ENCODE measurements at regions of chr7 and their contacts with region 1.

Region 1: DNA sequence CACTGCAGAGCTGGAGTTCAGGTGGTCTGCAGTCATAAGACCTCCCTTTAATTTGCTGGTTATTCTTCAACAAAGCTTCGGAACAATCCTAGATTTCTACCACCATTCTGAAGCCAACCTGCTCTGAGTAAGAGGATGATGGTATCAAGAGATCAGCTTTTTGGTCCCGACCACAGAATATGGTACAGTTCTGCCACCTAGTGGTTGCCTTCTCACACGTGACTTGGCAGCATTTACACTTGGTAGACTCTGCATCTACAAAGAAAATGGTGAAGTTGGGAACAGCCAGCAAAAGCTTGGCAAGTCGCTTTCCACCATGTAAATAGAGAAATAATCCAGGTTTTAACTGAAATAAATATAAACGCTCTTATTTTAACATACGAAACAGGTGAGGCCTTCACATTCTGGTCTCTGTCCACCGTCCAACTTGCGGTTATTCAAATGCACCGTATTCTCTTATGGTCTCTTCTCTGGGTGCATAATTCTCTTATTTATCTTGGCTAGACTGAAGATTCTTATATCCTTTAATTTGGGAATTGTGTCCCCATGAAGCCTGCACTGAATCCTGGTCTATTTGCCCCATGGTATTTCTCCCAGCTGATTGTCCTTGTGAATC is 173.9 kb upstream of the GRM3 start:
- DNase-seq: peak; percentile 62
- H3K4me3 Mint-ChIP-seq: no peak overlapping the region
- H3K27ac Mint-ChIP-seq: no peak overlapping the region
- H3K4me1 Mint-ChIP-seq: no peaks in the 10 kb centered on the region
- H3K27me3 Mint-ChIP-seq: no peaks in the 10 kb centered on the region

Region 2: DNA sequence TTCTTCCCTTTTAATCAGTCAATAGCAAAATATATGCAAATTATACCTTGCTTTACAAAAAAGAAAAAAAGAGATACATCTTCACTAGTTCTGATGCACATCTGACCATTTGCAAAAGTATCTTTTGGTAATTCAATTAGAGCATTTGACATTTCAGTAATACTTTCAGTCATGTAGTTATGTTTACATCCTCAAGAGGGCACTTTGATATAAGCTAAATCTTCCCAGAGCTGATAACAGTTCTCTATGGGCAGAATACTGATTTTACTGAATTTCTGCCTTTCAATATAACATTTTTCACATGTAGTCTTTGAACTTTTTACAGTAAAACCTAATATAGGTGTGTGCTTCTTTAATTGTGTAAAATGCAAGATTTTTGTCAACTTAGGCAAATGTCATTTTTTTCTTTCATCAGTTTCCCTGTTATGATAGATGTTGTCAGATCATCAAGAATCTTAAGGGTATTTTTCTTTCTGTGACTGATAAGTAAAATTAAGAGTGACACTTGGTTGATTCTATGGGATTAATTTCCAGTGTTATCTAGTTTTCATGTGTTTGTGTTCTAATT is 579.5 kb before region 1 on chr7:
- CTCF ChIA-PET with region 1: interaction called, 15 read pairs
- DNase-seq: no peak
- H3K4me3 Mint-ChIP-seq: no peak overlapping the region
- H3K27ac Mint-ChIP-seq: no peak overlapping the region
- H3K4me1 Mint-ChIP-seq: no peaks in the 10 kb centered on the region
- H3K27me3 Mint-ChIP-seq: no peaks in the 10 kb centered on the region